ENCODE measurements at regions of chr6 and their contacts with region 1.

Region 1: DNA sequence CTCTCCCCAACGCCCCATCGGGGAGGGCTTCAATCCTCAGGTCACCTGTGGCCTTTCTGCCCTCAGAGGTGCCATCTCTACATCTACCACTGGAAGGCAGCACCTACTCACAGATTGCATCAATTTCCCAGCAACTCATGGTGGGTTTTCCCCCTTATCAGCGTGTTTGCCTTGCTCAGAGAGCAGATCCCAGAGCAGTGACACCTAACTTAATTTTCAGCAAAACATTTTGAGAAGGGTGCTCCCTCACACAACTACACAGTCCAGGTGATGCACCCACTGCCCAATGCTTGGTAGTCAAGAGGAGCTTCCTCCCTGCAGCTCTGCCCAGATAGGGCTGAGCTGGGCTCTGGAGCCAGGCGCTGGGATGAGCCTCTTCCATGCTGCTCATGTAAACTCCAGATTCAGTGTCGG is 48.2 kb downstream of the PLG start:
- DNase-seq: peak; percentile 18
- ATAC-seq: peak; percentile 87
- H3K4me3 ChIP-seq: no peak overlapping the region
- H3K27ac ChIP-seq: no peak overlapping the region
- H3K4me1 ChIP-seq: no peaks in the 10 kb centered on the region
- H3K27me3 ChIP-seq: peaks cover 4% of the 10 kb centered on the region; the same call in 1 of the 2 replicates
- CTCF ChIP-seq: peak; percentile 67 to 90 (median 80)
- POLR2A ChIP-seq: no peak
- RAD21 ChIP-seq: peak; percentile 94

Region 2: DNA sequence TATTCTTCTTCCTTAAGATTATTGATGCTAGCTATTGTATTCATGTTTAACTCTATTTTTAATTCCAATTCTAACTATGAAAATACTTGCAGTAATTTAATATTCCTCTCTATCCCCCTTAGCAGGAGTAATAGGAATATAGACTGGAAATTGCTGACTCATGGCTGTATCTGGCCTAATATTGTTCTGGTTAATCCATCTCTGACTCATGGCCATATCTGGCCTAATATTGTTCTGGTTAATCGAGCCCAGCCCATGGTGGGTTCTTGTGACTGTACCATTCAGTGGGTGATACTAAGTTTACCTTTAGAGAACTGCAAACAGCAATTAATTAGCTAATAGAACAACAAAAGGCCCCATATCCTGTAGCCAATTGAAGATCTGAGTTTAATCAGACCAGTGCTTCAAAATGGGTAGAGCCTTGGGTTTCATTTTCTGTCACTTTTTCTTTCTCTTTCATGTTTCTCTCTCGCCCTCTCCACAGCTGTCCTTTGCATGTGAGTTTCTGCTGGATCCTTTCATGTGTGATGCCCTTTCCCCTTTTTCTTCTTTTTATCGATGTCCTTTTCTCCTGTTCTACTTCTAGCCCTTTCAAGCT is 351.5 kb before region 1 on chr6:
- CTCF ChIA-PET with region 1: no interaction called
- POLR2A ChIA-PET with region 1: no interaction called
- RAD21 ChIA-PET with region 1: no interaction called
- intact Hi-C with region 1: no loop called
- DNase-seq: no peak
- ATAC-seq: no peak
- H3K4me3 ChIP-seq: no peak overlapping the region
- H3K27ac ChIP-seq: no peak overlapping the region
- H3K4me1 ChIP-seq: peaks cover 5% of the 10 kb centered on the region in 2 experiments; a peak in 2 of 4 replicates
- H3K27me3 ChIP-seq: no peaks in the 10 kb centered on the region
- CTCF ChIP-seq: no peak
- POLR2A ChIP-seq: no peak
- RAD21 ChIP-seq: no peak

Region 3: DNA sequence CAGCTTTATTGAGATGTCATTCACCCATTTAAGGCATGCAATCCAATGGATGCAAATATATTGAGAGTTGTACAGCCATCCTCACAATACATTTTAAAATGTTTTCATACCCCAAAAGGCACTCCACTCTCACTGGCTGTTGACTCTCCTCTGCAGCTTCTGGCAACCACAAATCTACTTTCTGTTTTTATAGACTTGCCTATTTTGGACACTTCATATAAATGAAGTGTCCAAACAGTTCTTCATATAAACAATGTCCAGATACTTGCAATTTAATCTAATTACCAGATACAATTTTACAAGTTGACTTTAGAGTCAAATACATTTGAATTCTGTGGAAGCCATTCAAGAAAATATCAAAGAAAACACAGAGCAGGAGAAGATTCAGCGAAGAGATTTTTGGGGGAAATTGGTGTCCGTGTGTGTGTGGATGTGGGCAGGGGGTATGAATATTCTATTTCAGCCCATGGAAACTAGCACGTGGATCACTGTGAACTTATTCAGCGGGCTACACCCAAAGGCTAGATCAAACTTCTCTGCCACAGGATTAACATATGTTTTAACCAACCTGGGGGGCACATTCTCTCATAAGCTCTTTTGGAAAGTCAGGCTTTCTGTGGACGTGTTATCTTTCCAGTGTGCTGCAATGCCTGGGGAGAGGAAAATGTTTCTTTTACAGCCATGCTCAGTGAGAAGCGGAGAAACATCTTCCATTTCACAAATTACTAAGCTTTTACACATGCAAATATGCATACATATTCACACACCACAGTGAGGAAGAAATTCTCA is 25.7 kb after region 1 on chr6:
- CTCF ChIA-PET with region 1: no interaction called
- POLR2A ChIA-PET with region 1: no interaction called
- RAD21 ChIA-PET with region 1: no interaction called
- intact Hi-C with region 1: no loop called
- DNase-seq: no peak
- ATAC-seq: no peak
- H3K4me3 ChIP-seq: no peak overlapping the region
- H3K27ac ChIP-seq: no peak overlapping the region
- H3K4me1 ChIP-seq: no peaks in the 10 kb centered on the region
- H3K27me3 ChIP-seq: no peaks in the 10 kb centered on the region
- CTCF ChIP-seq: no peak
- POLR2A ChIP-seq: no peak
- RAD21 ChIP-seq: no peak

Region 4: DNA sequence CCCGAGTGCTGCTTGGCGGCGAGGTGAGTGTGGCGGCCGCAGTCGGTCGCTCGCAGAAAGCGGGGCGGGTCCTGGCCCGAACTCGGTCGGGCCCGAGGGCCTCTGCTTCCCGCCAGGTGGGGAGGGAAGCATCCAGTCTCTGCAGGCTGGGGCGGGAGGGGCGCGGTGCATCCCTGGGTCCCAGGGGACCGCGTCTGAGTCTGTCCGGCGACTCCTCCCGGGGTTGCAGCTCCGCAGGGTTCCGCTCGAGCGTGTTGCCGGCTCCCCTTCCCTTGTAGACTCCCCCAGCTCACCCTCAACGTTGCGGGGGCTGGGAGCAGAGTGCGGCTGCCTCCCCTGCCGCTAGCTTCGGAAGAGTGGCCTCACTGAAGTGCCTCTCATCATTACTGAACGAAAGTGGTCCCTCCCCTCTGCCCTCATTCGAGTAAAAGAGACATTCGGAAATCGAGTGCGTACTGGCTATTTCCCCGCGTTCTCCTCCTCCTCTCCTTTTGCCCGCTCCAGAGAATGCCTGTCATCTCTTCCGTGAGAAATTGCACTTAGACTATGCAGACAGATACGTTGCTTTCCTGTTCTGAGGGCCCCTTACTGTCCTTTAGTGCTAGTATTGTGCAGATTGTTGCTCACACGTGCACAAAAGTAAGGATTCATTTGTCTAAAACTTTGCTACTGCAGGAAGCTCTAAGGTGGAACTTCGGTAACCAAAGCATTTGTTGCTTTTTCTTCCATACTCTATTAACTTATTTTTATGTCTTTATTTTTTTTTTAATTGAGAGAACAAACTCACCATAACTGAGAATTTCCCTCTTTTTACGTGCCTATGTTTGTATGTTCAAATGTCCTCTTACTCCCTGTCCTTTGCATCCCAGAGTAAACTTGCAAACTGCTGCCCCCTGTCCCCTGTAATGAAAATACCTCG is 242.0 kb after region 1 on chr6:
- CTCF ChIA-PET with region 1: interaction called, 3 read pairs
- POLR2A ChIA-PET with region 1: interaction called, 3 read pairs
- RAD21 ChIA-PET with region 1: interaction called, 3 to 4 read pairs
- intact Hi-C with region 1: loop called (anchors 5 kb)
- DNase-seq: peak; percentile 42
- ATAC-seq: peak; percentile 63
- H3K4me3 ChIP-seq: peak overlapping the region; percentile 87 to 97
- H3K27ac ChIP-seq: peak overlapping the region; percentile 89
- H3K4me1 ChIP-seq: peaks cover 3 to 18% of the 10 kb centered on the region in 2 experiments; a peak in 3 of 4 replicates
- H3K27me3 ChIP-seq: no peaks in the 10 kb centered on the region
- CTCF ChIP-seq: peak; percentile 49 to 69 (median 69); a peak in 5 of 6 replicates
- POLR2A ChIP-seq: no peak
- RAD21 ChIP-seq: peak; percentile 63

Region 5: GRCh38 chr6:161152907-161153662 is 402.8 kb after region 1 on chr6:
- CTCF ChIA-PET with region 1: no interaction called
- POLR2A ChIA-PET with region 1: no interaction called
- RAD21 ChIA-PET with region 1: no interaction called
- intact Hi-C with region 1: loop called (anchors 5 kb)
- DNase-seq: no peak
- ATAC-seq: peak; percentile 84
- H3K4me3 ChIP-seq: no peak overlapping the region
- H3K27ac ChIP-seq: no peak overlapping the region
- H3K4me1 ChIP-seq: no peaks in the 10 kb centered on the region
- H3K27me3 ChIP-seq: no peaks in the 10 kb centered on the region
- CTCF ChIP-seq: peak; percentile 53 to 70 (median 64); a peak in 5 of 6 replicates
- POLR2A ChIP-seq: no peak
- RAD21 ChIP-seq: peak; percentile 91

Measured in HCT116 (cell line).